CD8-positive, alpha-beta T cell (primary cell): ENCODE measurements at regions of chr2 and their contacts with region 1.

Region 1: DNA sequence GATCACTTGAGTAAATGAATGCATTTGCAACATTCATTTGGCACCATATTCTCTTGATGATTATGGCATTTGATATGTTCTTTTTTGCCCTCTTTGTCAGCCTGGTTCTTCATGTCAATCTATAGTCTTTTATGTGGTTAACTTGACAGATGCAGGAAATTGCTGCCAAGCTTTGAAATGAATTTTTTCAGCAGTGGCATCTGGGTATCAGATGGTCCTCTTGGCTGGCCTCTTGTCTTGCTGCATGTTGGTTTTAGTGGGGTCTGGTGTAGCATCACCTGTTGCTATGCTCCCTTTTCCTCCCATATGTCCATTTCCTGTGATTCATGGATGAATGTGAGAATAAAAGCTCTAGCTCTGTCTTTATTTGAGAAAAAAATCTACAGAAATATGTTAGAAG is 119.9 kb downstream of the DPP4 start:
- DNase-seq: peak in 3 of 9 experiments; percentile 21 to 74 (median 61)
- ATAC-seq: peak; percentile 60
- H3K4me3 ChIP-seq: no peak overlapping the region
- H3K4me3 Mint-ChIP-seq: peak overlapping the region; percentile 16
- H3K27ac ChIP-seq: no peak overlapping the region
- H3K27ac Mint-ChIP-seq: peak overlapping the region; percentile 5
- H3K4me1 ChIP-seq: peaks cover 52% of the 10 kb centered on the region
- H3K4me1 Mint-ChIP-seq: peaks cover 54% of the 10 kb centered on the region
- H3K27me3 ChIP-seq: no peaks in the 10 kb centered on the region
- H3K27me3 Mint-ChIP-seq: no peaks in the 10 kb centered on the region
- CTCF ChIP-seq: no peak

Region 2: GRCh38 chr2:161238560-161239325 is 715.4 kb before region 1 on chr2:
- CTCF ChIA-PET with region 1: no interaction called
- POLR2A ChIA-PET with region 1: no interaction called
- intact Hi-C with region 1: loop called in 1 of 2 experiments (anchors 10 kb)
- DNase-seq: peak; percentile 18 to 74 (median 68)
- ATAC-seq: peak; percentile 71
- H3K4me3 ChIP-seq: peak overlapping the region; percentile 56 to 64
- H3K4me3 Mint-ChIP-seq: peak overlapping the region; percentile 92
- H3K27ac ChIP-seq: no peak overlapping the region
- H3K27ac Mint-ChIP-seq: peak overlapping the region; percentile 78
- H3K4me1 ChIP-seq: peaks cover 16% of the 10 kb centered on the region
- H3K4me1 Mint-ChIP-seq: peaks cover 49% of the 10 kb centered on the region
- H3K27me3 ChIP-seq: peaks cover 0 to 4% of the 10 kb centered on the region in 2 experiments
- H3K27me3 Mint-ChIP-seq: peaks cover 2% of the 10 kb centered on the region
- CTCF ChIP-seq: no peak

Region 3: DNA sequence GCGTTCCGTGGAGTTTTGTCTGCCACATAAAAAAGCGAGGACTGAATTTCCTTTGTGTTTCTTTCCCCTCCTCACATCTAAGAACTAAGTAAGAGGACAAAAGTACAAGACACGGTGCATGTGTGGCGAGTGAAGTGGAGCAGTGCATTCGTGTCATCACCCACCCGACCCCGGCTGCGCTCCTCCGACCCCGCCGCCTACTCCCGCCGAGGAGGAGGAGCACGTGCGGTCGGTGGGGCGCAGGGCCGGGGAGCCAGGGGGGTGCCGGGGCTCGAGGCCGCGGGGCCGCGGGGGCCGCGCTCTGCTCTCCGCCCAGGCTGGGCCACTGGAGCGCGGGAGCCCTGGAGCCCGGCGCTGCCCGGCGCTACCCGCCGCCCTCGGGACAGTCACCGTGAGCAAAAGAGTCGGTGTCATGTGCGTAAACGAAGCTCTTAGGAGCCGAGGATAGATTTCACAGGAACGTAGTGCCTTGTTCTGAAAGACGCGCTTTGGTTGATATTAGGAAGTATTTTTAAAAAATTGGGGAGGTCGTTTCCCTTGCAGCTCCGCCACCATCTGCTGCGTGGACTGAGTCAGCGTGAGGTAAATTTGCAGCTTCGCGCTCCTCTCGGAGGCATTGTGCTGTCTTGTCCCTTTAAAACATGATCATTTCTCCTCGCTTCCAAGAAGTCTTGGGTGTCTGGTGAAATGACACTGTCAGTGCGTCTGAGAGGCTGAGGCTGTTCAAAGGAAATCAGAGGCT is 527.0 kb before region 1 on chr2:
- CTCF ChIA-PET with region 1: no interaction called
- POLR2A ChIA-PET with region 1: no interaction called
- intact Hi-C with region 1: loop called in 1 of 2 experiments (anchors 10 kb)
- DNase-seq: peak in 1 of 9 experiments; percentile 27
- ATAC-seq: peak; percentile 32
- H3K4me3 ChIP-seq: no peak overlapping the region
- H3K4me3 Mint-ChIP-seq: peak overlapping the region; percentile 69
- H3K27ac ChIP-seq: no peak overlapping the region
- H3K27ac Mint-ChIP-seq: no peak overlapping the region
- H3K4me1 ChIP-seq: peaks cover 18% of the 10 kb centered on the region
- H3K4me1 Mint-ChIP-seq: peaks cover 29% of the 10 kb centered on the region
- H3K27me3 ChIP-seq: peaks cover 34 to 52% of the 10 kb centered on the region in 2 experiments
- H3K27me3 Mint-ChIP-seq: peaks cover 82% of the 10 kb centered on the region
- CTCF ChIP-seq: no peak

Region 4: GRCh38 chr2:161780881-161781280 is 173.2 kb before region 1 on chr2:
- CTCF ChIA-PET with region 1: no interaction called
- POLR2A ChIA-PET with region 1: no interaction called
- intact Hi-C with region 1: no loop called
- DNase-seq: no peak
- ATAC-seq: no peak
- H3K4me3 ChIP-seq: no peak overlapping the region
- H3K4me3 Mint-ChIP-seq: no peak overlapping the region
- H3K27ac ChIP-seq: no peak overlapping the region
- H3K27ac Mint-ChIP-seq: no peak overlapping the region
- H3K4me1 ChIP-seq: no peaks in the 10 kb centered on the region
- H3K4me1 Mint-ChIP-seq: no peaks in the 10 kb centered on the region
- H3K27me3 ChIP-seq: no peaks in the 10 kb centered on the region
- H3K27me3 Mint-ChIP-seq: no peaks in the 10 kb centered on the region
- CTCF ChIP-seq: no peak

Region 5: DNA sequence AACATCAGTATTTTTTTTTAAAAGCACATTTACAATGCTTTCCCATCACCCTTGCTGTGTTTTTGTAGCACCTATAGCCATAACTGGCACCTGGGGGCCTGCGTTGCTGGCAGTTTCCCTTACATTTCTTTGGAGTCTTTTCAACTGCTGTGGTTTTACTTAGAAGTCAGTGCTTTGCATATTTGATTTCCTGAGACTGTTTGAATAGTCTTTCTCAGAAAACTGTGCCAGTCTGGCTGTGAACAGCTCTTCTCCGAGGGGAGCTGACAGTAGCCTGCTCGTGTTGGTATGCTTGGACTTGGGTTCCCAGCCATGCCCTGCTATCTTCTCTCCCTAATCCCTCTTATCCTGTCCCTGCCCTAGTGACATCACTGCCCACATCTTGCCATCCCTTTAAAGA is 38.4 kb after region 1 on chr2:
- CTCF ChIA-PET with region 1: interaction called, 3 read pairs
- POLR2A ChIA-PET with region 1: interaction called, 3 read pairs
- intact Hi-C with region 1: loop called in 1 of 2 experiments (anchors 2 kb)
- DNase-seq: peak; percentile 12 to 69 (median 48)
- ATAC-seq: peak; percentile 76
- H3K4me3 ChIP-seq: peak overlapping the region; percentile 7 to 34
- H3K4me3 Mint-ChIP-seq: peak overlapping the region; percentile 87
- H3K27ac ChIP-seq: peak overlapping the region; percentile 44 to 70
- H3K27ac Mint-ChIP-seq: peak overlapping the region; percentile 98
- H3K4me1 ChIP-seq: peaks cover 49% of the 10 kb centered on the region
- H3K4me1 Mint-ChIP-seq: peaks cover 56% of the 10 kb centered on the region
- H3K27me3 ChIP-seq: no peaks in the 10 kb centered on the region
- H3K27me3 Mint-ChIP-seq: no peaks in the 10 kb centered on the region
- CTCF ChIP-seq: no peak

Region 6: DNA sequence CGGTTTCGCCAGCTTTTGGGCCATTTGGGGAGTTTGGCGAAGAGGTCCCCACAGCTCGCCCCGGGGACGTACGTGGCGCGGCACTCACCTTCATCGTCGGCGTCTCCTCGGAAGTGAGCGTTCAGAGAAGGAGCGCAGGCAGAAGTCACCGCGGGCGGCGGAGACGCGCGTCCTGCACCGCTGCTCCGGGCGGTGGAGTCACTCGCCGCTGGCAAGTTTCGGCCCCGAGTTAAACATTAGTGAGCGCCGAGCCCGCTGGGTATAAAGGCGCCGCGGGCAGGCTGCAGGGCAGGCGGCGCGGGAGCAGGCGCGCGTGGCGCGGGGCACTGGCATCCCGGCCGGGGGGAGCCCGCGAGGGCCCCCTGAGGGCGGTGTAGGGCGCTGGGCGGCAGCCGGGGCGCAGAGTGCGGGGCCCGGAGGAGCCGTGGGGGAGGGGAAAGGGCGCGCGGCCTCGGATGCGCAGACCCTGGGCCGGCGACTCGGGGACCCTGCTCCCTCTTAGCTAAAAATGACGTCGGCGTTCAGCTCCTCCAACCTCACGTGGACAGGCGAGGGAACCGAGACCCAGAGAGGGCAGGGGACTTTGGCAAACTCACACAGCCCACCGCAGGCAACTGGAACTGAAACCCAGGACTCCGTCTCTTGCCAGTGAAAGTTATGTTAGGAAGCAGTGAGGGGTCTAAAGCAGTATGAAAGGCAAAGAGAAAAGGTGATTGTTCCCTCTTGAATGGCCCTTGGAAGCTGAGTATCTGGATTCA is 120.0 kb after region 1 on chr2 and contains the start of gene DPP4:
- CTCF ChIA-PET with region 1: interaction called, 3 read pairs
- POLR2A ChIA-PET with region 1: no interaction called
- intact Hi-C with region 1: loop called in 1 of 2 experiments (anchors 5 kb)
- DNase-seq: peak; percentile 19 to 77 (median 49)
- ATAC-seq: peak; percentile 80
- H3K4me3 ChIP-seq: peak within 1 kb of the TSS; percentile 79 to 83
- H3K4me3 Mint-ChIP-seq: peak within 1 kb of the TSS; percentile 96
- H3K27ac ChIP-seq: peak within 1 kb of the TSS; percentile 31 to 67
- H3K27ac Mint-ChIP-seq: peak within 1 kb of the TSS; percentile 93
- H3K4me1 ChIP-seq: peaks cover 26% of the 10 kb centered on the region
- H3K4me1 Mint-ChIP-seq: peaks cover 49% of the 10 kb centered on the region
- H3K27me3 ChIP-seq: no peaks in the 10 kb centered on the region
- H3K27me3 Mint-ChIP-seq: no peaks in the 10 kb centered on the region
- CTCF ChIP-seq: no peak
- total RNA-seq, gene DPP4: 13.5 to 15.4 TPM